HepG2 (cell line): ENCODE measurements at regions of chr1 and their contacts with region 1.

Region 1: DNA sequence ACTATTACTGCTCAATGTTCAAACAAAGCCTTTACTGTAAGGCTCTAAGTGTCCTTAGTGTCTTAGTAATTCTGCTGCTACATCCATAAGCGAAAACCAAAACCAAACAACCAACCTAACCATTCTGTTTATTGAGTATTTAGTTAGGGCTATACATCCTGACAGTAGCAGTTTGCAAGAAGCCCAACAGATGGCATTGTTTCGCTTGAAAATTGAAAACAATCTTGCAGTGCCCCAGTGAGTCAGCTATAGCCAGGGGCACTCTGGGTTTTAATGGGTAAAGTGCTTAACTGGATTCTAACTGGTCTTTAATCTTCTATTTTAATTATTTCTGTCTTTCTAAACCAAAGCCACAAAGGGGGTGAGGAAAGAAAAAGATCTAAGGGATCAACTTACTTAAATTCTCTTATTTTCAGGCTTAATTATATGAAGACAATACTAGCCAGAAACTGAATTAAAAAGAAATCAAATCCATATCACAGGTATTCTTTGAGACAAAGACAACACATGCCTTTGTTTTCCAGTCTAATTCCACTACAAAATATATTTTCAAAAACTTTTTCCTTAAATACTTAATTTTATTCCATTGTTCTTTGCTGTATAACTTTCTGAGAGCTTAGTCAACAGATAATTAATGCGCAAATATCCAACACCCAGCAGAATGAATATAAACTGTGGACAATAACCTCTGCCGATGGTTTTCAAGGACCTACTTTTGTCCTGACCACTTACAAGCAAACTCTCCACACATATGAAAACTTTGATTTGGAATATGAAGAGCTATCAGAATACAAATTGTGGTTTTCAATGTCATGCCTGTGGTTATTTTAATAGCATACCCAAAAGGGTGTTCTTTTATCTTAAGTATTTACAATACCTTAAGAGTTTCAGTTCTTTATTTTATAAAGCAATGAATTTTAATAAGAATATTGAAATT is 15.2 kb downstream of the POGZ start:
- DNase-seq: peak; percentile 69
- ATAC-seq: peak; percentile 93
- H3K4me3 ChIP-seq: no peak overlapping the region
- H3K27ac ChIP-seq: peak overlapping the region; percentile 11
- H3K4me1 ChIP-seq: no peaks in the 10 kb centered on the region
- H3K27me3 ChIP-seq: no peaks in the 10 kb centered on the region
- CTCF ChIP-seq: peak; percentile 73
- EP300 ChIP-seq: no peak
- POLR2A ChIP-seq: no peak
- RAD21 ChIP-seq: peak; percentile 60; the same call in 1 of the 2 replicates

Region 2: GRCh38 chr1:151534665-151535278 is 90.7 kb after region 1 on chr1:
- CTCF ChIA-PET with region 1: interaction called, 8 read pairs
- POLR2A ChIA-PET with region 1: no interaction called
- in situ Hi-C with region 1: no loop called
- intact Hi-C with region 1: loop called (anchors 2 kb)
- DNase-seq: peak; percentile 53
- ATAC-seq: peak; percentile 85
- H3K4me3 ChIP-seq: no peak overlapping the region
- H3K27ac ChIP-seq: no peak overlapping the region
- H3K4me1 ChIP-seq: peaks cover 16% of the 10 kb centered on the region
- H3K27me3 ChIP-seq: no peaks in the 10 kb centered on the region
- CTCF ChIP-seq: peak; percentile 93
- EP300 ChIP-seq: no peak
- POLR2A ChIP-seq: no peak
- RAD21 ChIP-seq: peak; percentile 87

Region 3: DNA sequence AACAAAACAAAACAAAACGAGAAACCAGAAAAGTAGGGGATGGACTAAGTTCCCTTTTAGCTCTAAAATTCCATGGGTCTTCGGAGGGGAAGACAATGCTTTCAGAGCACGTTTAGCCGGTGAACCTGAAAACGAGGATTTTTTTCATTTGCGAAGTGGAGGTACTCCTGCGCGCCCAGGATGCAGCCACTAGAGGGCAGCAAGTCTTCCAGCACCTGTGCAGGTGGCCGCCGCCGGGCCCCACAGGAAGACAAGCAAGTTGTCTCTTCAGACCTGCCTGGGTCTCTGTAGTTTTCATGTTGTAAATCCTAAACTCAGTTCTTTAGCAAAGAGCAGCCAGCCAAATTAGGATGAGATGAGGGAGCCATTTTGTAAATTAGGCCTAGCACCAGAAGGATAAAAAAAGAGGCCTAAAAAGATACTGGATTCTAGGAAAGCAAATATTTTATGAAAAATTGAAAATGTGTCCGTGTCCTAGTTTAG is 150.1 kb after region 1 on chr1:
- CTCF ChIA-PET with region 1: no interaction called
- POLR2A ChIA-PET with region 1: no interaction called
- in situ Hi-C with region 1: no loop called
- intact Hi-C with region 1: loop called (anchors 10 kb)
- DNase-seq: peak; percentile 59
- ATAC-seq: peak; percentile 92
- H3K4me3 ChIP-seq: peak overlapping the region in 2 of 3 experiments; percentile 15 to 21; a peak in 2 of 6 replicates
- H3K27ac ChIP-seq: no peak overlapping the region
- H3K4me1 ChIP-seq: peaks cover 34% of the 10 kb centered on the region
- H3K27me3 ChIP-seq: peaks cover 0 to 3% of the 10 kb centered on the region in 2 experiments; a peak in 1 of 5 replicates
- CTCF ChIP-seq: peak; percentile 91
- EP300 ChIP-seq: no peak
- POLR2A ChIP-seq: no peak
- RAD21 ChIP-seq: peak; percentile 80